KBM-7 (cell line): ENCODE measurements at regions of chr4 and their contacts with region 1.

Region 1: DNA sequence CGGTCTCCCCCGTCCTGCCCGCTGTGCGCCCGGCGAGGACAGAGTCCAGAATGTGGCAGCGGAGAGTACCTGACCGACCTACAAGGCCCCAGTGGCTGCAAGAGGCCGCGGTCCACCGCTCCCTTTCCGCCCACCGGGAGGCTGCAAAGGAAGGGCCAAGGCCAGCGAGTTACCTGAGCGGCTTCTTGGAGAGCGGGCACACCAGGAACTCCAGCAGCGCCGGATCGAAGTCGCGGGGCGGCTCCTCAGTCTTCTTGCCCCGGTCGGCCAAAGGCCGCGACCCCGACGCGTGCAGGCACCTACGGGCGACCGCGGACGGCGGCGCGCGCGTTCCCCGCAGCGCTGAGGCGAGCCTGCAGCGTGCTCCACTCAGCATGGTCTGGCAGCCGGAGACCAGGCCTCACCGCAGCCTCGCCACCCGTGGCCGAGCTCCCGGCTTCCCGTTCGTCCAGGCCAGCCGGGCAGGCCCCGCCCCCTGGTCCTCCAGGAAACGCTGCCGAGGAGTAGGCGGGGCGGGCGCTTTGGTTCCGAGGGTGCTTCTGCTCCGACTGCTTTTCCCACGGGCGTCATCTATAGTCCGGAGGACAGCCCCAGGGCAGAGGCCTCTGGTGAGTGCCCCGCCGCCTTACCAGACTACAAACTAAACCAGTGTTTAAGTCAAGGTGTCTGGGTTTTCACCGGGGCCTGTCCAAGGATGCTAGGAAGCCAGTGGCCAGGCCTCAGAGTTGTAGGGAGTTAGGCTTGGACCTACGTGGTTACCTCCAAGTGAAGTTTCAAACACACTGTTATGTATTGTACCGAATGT is at the start of gene PYURF:
- DNase-seq: peak; percentile 93

Region 2: GRCh38 chr4:88033309-88033708 is 490.2 kb before region 1 on chr4:
- in situ Hi-C with region 1: loop called (anchors 25 kb)
- DNase-seq: peak; percentile 65

Region 3: DNA sequence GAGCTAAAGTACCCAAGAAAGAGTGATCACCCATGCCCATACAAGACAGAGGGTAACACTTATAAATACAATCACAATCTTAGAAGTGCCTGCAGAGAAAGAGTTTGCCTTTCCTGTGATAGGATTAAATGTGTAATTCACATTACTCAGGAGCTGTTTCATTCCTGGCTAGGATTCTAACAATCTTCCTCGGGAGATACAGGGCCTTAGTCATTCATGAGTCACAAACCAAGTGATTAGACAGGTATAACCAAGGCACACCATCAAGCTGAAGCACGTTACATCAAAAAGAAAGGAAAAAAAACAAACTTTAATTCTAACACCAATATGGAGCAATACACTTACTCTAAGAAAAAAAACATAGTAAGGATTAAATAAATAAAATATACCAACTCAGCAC is 380.0 kb before region 1 on chr4:
- in situ Hi-C with region 1: no loop called
- DNase-seq: no peak

Region 4: DNA sequence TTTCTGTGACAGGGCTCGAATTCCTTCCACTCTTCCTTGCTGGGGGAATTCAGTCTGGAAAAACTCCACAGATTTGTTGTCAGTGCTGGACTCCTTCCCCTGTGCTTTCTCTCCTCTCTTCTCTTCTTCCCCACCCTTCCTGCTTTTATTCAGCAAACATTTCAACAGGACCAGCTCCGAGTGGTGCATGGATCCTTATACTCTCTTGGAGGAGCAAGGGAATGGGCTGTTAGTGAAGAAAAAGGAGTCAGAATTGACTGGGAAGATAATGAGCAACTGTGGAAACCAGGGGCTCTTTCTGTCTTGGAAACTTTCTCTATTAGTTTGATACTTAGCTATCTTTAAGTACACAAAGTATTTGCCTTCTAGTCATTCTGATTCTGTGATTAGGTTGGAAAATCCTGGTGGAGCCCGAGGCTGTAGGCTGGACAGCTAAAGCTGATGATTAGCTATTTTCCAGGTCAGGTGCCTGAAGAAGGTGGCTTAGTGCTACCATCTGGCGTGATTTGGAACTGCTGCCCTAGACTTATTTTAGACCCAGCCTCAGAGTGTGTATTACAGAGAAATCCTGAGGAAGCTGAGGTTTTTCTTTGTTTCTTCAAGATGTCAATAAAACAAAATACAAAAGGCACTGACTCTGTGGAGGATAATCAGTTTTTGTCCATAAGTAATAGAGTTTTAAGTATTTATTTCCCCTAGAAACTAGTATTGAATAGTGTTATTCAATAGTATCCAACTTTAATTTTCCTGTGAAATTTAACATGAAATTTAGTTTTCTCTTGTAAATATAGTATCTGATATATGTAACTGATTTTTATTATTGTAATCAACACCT is 135.7 kb after region 1 on chr4:
- in situ Hi-C with region 1: loop called (anchors 25 kb)
- DNase-seq: peak; percentile 65